Left cardiac atrium (tissue), 4 donors: ENCODE measurements at regions of chr1 and their contacts with region 1.

Region 1: GRCh38 chr1:23743287-23744052 is at the start of gene ELOA:
- DNase-seq: peak; percentile 81
- ATAC-seq: peak; percentile 97
- total RNA-seq, gene ELOA: 30.0 to 30.2 TPM

Region 2: DNA sequence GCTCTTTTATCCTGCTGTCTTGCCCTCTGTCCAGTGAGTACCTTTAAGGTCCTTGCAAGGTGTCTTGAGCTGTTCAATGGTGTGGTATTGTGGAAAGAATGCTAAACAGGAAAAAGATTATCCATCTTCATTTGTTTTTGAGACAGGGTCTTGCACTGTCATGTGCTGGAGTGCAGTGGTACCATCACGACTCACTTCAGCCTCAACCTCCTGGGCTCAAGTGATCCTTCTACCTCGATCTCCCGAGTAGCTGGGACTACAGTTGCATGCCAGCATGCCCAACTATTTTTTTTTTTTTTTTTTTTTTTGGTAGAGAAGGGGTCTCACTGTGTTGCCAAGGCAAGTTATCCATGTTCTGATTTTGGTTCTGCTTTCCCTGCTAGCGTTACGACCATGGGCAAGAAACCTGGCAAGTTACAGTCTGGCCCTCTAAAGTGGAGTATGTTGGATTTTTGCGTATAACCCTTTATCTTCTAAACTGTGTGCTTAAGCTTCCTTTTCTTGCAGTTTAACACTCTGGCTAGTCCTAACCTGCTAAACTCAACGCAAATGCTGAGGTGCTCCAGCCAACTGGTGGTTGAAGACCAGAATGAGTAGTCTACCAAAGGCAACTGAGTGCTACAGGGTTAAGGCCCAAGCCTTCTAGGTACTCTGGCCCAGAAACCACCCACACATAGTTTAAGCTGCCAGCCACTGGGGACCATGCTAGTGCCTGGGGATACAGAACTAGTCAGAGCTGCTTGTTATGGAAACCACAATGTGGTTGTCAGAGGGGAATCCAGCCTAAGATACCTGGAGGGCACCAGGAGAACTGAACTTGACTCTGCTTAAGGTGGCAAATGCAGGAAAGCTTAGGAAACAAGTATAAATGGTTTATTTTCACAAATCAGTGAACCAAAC is 43.9 kb before region 1 on chr1:
- intact Hi-C with region 1: loop called in 1 of 2 experiments (anchors 5 kb)
- DNase-seq: no peak
- ATAC-seq: peak in 1 of 2 donors; percentile 11